MCF 10A (cell line): ENCODE measurements at regions of chr10 and their contacts with region 1.

Region 1: GRCh38 chr10:104121520-104122224 is at the start of gene SFR1:
- DNase-seq: peak; percentile 98
- H3K4me3 Mint-ChIP-seq: peak within 1 kb of the TSS; percentile 79
- H3K27ac Mint-ChIP-seq: peak within 1 kb of the TSS; percentile 99
- H3K4me1 Mint-ChIP-seq: peaks cover 45% of the 10 kb centered on the region
- H3K27me3 Mint-ChIP-seq: no peaks in the 10 kb centered on the region
- CTCF ChIP-seq: peak; percentile 52
- total RNA-seq, gene SFR1: 7.7 and 8.9 TPM in 2 replicates

Region 2: GRCh38 chr10:103888113-103888841 is 233.4 kb before region 1 on chr10:
- CTCF ChIA-PET with region 1: interaction called, 12 read pairs
- POLR2A ChIA-PET with region 1: interaction called, 46 read pairs
- intact Hi-C with region 1: loop called (anchors 1 kb)
- DNase-seq: peak; percentile 95
- H3K4me3 Mint-ChIP-seq: peak overlapping the region; percentile 1
- H3K27ac Mint-ChIP-seq: peak overlapping the region; percentile 73
- H3K4me1 Mint-ChIP-seq: peaks cover 23% of the 10 kb centered on the region
- H3K27me3 Mint-ChIP-seq: no peaks in the 10 kb centered on the region
- CTCF ChIP-seq: peak; percentile 80

Region 3: DNA sequence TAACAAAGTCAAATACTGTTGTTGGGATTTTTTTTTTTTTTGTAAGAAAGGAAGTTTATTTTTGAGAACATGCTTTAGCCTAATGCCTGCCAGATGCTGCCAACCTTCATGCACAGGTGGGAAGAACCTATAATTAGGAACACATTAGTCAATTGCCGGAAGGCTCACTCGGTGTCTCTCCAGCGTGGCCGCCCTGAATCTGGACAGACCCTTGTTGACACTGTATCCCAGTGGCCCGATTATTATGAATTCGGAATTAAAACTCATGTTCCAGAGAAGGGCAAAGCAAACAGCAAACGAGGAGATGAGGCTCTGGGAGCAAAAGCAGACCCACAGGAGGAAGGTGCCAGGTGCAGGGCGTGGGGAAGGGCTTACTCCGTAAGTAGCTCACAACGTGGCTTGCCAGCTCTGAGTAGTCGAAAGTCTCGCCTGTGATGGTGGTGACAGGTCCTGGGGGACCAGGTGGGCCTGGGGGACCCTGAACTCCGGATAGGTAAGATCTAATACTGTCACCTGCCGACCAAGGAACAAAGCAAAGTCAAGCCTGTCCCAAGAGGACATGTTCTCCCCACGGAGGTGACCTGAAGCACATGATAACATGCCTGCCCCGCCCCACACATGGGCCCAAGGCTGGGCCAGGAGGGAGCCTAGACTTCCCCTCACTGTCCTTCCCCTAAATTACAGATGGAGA is 84.3 kb before region 1 on chr10:
- CTCF ChIA-PET with region 1: interaction called, 8 read pairs
- POLR2A ChIA-PET with region 1: interaction called, 53 read pairs
- intact Hi-C with region 1: no loop called
- DNase-seq: no peak
- H3K4me3 Mint-ChIP-seq: no peak overlapping the region
- H3K27ac Mint-ChIP-seq: no peak overlapping the region
- H3K4me1 Mint-ChIP-seq: no peaks in the 10 kb centered on the region
- H3K27me3 Mint-ChIP-seq: no peaks in the 10 kb centered on the region
- CTCF ChIP-seq: no peak

Region 4: DNA sequence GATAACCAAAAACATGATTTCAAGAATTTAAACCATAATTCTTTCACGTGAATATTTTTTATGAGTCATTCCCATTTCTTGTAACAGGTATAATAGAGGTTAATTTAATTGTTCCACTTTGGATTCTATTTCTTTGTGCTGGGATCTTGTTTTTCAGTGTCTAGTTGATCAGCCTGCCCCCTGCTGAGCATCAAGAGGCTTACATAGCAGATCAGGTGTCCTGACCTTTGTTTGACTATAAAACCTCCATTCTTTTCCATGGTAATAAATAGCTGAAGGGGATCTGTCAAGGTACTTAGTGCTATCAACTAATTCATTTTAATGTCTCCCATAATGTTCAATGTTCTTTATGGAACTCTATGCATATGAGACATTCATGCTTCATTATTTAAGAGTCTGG is 40.9 kb before region 1 on chr10:
- CTCF ChIA-PET with region 1: interaction called, 157 read pairs
- POLR2A ChIA-PET with region 1: interaction called, 1,749 read pairs
- intact Hi-C with region 1: loop called (anchors 1 kb)
- DNase-seq: peak; percentile 65
- H3K4me3 Mint-ChIP-seq: peak overlapping the region; percentile 83
- H3K27ac Mint-ChIP-seq: no peak overlapping the region
- H3K4me1 Mint-ChIP-seq: peaks cover 24% of the 10 kb centered on the region
- H3K27me3 Mint-ChIP-seq: no peaks in the 10 kb centered on the region
- CTCF ChIP-seq: peak; percentile 45

Region 5: DNA sequence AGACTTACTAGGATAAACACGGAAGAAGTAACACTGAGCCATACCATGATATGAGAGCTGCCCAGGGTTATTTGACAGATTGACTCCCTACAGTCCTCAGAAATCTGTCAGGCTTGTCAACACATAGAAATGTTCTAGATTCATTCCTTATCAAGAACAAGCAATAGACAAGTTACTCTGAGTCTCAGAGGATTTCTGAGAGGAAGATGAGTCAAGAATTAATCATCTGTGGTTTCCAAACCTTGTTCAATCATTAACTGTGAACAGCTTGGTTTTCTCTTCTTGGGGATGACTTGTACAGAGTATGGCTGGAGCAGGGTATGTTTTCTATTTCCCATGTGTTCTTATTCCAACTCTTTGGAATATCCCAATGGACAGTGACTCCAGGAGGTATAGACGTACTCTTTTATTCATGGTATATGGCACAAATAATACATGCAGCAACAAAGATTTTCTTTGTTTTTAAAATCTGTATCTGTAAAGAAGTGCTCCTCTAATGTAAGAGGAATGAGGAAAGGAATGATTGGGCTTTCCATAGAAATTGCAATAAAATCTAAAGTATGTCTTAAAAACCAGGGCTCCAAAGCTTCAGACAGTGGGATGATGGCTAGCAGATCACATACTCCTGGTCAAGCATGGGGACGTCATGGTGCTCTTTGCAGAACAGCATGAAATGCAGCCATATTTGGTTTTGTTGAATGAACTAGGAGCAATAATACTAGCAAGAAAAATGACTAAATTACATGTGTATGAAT is 11.6 kb before region 1 on chr10:
- CTCF ChIA-PET with region 1: interaction called, 6 read pairs
- POLR2A ChIA-PET with region 1: interaction called, 82 read pairs
- intact Hi-C with region 1: no loop called
- DNase-seq: peak; percentile 70
- H3K4me3 Mint-ChIP-seq: no peak overlapping the region
- H3K27ac Mint-ChIP-seq: peak overlapping the region; percentile 87
- H3K4me1 Mint-ChIP-seq: peaks cover 11% of the 10 kb centered on the region
- H3K27me3 Mint-ChIP-seq: no peaks in the 10 kb centered on the region
- CTCF ChIP-seq: no peak

Region 6: DNA sequence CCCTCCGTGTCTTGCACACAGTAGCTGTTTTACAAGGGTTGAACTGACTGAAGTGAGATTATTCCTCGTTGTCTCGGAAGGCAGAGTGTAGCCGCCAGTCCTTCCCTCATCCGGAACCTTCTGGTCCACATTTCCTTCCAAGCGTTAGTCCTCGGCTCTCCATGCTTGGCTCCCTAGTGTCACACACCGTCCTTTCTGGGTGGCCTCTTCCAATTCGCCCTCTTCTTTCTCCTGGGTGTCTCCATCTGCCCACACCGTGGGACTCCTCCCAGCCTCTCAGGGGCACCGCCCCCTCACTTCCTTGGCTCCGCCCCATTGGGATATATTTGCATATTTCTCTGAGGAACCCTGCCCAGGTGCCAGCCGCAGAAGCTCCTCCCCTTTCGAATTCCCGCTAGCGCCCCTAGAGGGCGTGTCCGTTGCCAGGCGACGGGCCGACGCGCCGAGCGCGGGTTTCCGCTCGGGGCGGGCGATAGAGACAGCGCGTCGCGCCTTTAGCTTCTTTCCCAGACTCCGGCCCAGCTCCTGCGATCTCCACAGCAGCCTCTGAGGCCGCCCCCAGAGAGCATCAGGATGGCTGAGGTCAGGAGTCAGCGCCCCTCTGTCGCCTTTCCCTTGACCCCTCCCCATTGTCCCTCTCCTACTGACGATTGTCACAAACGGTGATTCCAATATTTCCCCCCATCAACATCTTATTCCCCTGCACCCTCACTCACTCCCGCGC is 231.8 kb after region 1 on chr10 and contains the start of gene CFAP58:
- CTCF ChIA-PET with region 1: no interaction called
- POLR2A ChIA-PET with region 1: no interaction called
- intact Hi-C with region 1: loop called (anchors 5 kb)
- DNase-seq: peak; percentile 95
- H3K4me3 Mint-ChIP-seq: no peak within 1 kb of the TSS
- H3K27ac Mint-ChIP-seq: no peak within 1 kb of the TSS
- H3K4me1 Mint-ChIP-seq: peaks cover 13% of the 10 kb centered on the region
- H3K27me3 Mint-ChIP-seq: no peaks in the 10 kb centered on the region
- CTCF ChIP-seq: peak; percentile 41
- total RNA-seq, gene CFAP58: 0.89 and 1.1 TPM in 2 replicates